CD4-positive, alpha-beta memory T cell (primary cell): ENCODE measurements at regions of chr2 and their contacts with region 1.

Region 1: GRCh38 chr2:3223080-3223923 is 154.3 kb downstream of the EIPR1 start:
- DNase-seq: peak; percentile 64 to 96 (median 72)
- H3K4me3 ChIP-seq: no peak overlapping the region
- H3K4me3 Mint-ChIP-seq: peak overlapping the region in 7 of 8 donors; percentile 39 to 72 (median 59)
- H3K27ac ChIP-seq: peak overlapping the region; percentile 87
- H3K27ac Mint-ChIP-seq: peak overlapping the region; percentile 95 to 99 (median 98)
- H3K4me1 ChIP-seq: peaks cover 34% of the 10 kb centered on the region
- H3K4me1 Mint-ChIP-seq: peaks cover 30 to 59% (median 42%) of the 10 kb centered on the region in 4 donors
- H3K27me3 ChIP-seq: no peaks in the 10 kb centered on the region
- H3K27me3 Mint-ChIP-seq: no peaks in the 10 kb centered on the region

Region 2: DNA sequence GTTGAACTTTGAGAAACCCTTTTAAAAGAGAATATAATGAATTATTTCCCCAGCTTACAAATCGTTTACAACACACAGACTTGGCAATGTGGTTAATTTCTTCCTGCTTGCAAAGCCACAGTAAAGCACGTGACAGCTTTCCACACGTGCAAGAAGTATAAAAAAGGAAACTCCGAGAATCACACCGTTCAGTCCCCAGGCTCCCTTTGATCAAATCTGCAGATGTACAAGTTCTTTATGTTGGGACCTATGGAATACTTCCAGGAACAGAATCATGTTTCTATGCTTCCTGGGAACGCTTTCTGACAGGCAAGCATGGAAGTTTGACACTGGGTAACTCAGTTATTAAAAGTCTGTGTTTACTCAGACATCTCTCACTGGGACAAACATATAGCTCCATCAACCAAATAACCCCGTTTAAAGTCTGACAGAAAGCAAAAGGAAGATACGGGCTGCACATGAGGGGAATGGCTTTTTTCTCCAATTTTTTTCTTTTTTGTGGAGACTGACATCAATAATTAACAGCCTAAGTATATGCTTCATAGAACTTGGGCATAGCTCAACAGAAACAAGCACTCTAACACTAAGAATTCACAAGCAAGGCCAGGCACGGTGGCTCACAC is 19.6 kb after region 1 on chr2:
- CTCF ChIA-PET with region 1: no interaction called
- POLR2A ChIA-PET with region 1: interaction called, 23 read pairs
- intact Hi-C with region 1: loop called (anchors 2 kb)
- DNase-seq: peak; percentile 64 to 75 (median 69)
- H3K4me3 ChIP-seq: no peak overlapping the region
- H3K4me3 Mint-ChIP-seq: peak overlapping the region; percentile 2 to 81 (median 73)
- H3K27ac ChIP-seq: peak overlapping the region; percentile 36
- H3K27ac Mint-ChIP-seq: peak overlapping the region; percentile 26 to 93 (median 87)
- H3K4me1 ChIP-seq: peaks cover 50% of the 10 kb centered on the region
- H3K4me1 Mint-ChIP-seq: peaks cover 8 to 25% (median 18%) of the 10 kb centered on the region in 4 donors
- H3K27me3 ChIP-seq: no peaks in the 10 kb centered on the region
- H3K27me3 Mint-ChIP-seq: no peaks in the 10 kb centered on the region